ENCODE measurements at regions of chr1 and their contacts with region 1.

Region 1: GRCh38 chr1:44377925-44378784 is 23.1 kb upstream of the ERI3 start:
- DNase-seq: peak; percentile 60
- H3K4me3 Mint-ChIP-seq: no peak overlapping the region
- H3K27ac Mint-ChIP-seq: no peak overlapping the region
- H3K4me1 Mint-ChIP-seq: no peaks in the 10 kb centered on the region
- H3K27me3 Mint-ChIP-seq: no peaks in the 10 kb centered on the region

Region 2: DNA sequence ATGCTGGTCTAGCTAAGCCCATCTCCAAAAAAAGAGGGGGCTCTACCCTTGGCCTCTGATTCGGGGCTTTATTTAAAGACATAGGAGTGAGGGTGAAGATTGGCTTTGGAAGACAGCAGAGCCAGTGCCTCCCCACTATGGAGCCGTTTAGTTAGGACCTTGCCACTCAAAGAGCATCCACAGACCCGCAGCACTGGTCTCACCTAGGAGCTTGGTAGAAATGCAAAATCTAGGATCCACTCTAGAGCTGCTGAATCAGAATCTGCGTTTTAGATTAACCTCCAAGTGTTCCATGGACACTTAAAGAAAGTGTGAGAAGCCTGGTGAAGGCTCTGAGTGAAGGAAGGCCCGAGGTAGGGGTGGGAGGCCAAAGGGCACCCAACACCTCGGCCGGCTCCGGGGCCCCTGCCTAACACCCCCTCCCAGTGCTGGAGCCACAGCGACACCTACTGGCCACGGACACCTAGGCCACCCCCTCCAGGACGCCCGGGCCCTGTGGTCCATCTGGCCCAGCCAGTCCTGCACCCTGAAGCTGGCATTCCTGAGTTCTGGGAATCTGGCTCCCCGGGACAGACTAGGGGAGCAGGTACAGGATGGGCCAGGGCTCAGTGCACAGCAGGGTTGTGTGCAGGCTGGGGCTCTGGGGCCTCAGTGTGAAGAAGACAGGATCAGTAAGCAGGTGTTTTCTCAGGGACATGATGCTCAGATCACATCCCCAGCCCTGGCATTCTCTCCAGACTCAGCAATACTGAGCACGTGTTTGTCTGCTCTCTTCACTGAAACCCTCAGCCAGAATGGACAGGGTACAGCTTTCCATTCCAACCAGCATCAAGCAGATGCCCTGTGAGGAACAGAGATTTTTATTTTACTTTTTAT is 217.0 kb after region 1 on chr1:
- CTCF ChIA-PET with region 1: interaction called, 104 read pairs
- POLR2A ChIA-PET with region 1: no interaction called
- intact Hi-C with region 1: loop called (anchors 1 kb)
- DNase-seq: peak; percentile 87
- H3K4me3 Mint-ChIP-seq: no peak overlapping the region
- H3K27ac Mint-ChIP-seq: no peak overlapping the region
- H3K4me1 Mint-ChIP-seq: no peaks in the 10 kb centered on the region
- H3K27me3 Mint-ChIP-seq: peaks cover 5% of the 10 kb centered on the region